ENCODE measurements at regions of chr12 and their contacts with region 1.

Region 1: GRCh38 chr12:131345521-131346436 is 365.1 kb upstream of the SFSWAP start:
- DNase-seq: peak; percentile 79 to 85
- H3K4me3 ChIP-seq: no peak overlapping the region
- H3K27ac ChIP-seq: no peak overlapping the region
- H3K4me1 ChIP-seq: no peaks in the 10 kb centered on the region
- H3K27me3 ChIP-seq: no peaks in the 10 kb centered on the region
- CTCF ChIP-seq: no peak
- POLR2A ChIP-seq: no peak

Region 2: GRCh38 chr12:131621701-131622421 is 276.1 kb after region 1 on chr12:
- intact Hi-C with region 1: loop called (anchors 10 kb)
- DNase-seq: no peak
- H3K4me3 ChIP-seq: no peak overlapping the region
- H3K27ac ChIP-seq: no peak overlapping the region
- H3K4me1 ChIP-seq: peaks cover 11% of the 10 kb centered on the region
- H3K27me3 ChIP-seq: no peaks in the 10 kb centered on the region
- CTCF ChIP-seq: no peak
- POLR2A ChIP-seq: no peak